ENCODE measurements at regions of chr1 and their contacts with region 1.

Region 1: GRCh38 chr1:6489799-6490180 is 1.7 kb downstream of the PLEKHG5 start:
- DNase-seq: no peak
- H3K4me3 ChIP-seq: peak overlapping the region; percentile 84
- CTCF ChIP-seq: peak; percentile 95

Region 2: GRCh38 chr1:6273380-6273891 is 216.4 kb before region 1 on chr1:
- CTCF ChIA-PET with region 1: no interaction called
- POLR2A ChIA-PET with region 1: no interaction called
- DNase-seq: peak; percentile 9
- H3K4me3 ChIP-seq: no peak overlapping the region
- CTCF ChIP-seq: no peak

Region 3: DNA sequence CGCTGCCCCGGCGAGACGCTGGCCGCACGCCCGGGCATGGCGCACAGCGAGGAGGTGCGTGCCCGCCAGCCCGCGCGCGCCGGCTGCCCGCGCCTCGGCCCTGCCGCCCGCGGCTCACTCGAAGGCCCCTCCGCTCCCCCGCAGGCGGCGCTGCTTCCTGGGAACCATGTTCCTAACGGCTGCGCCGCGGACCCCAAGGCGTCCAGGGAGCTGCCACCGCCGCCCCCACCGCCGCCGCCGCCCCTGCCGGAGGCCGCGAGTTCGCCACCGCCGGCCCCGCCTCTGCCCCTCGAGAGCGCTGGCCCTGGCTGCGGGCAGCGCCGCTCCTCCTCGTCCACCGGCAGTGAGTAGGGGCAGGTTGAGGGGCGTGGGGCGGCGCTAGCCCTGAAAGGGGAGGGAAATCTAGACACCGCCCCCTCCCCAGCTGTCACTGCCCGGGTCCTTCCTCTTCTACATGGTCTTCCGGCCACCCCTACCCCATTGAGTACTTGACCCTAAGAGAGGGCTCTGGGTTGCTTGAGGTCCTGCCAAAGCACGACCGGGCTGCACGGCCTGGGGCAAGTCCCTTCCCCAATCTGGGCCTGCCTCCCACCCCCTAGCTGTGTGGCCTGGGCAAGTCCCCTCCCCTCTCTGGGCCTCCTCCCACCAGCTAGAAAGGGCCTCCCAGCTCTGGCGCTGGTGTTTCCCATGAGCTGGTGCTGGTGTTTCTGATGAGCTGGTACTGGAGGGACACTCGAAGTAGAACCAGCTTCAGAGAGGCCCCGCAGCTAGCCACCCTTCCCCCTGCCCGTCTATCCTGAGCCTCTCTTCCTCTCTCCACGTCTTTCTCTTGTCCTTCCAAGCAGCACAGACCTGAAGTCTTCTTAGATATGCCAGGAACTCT is 40.8 kb before region 1 on chr1:
- CTCF ChIA-PET with region 1: interaction called, 13 read pairs
- POLR2A ChIA-PET with region 1: no interaction called
- DNase-seq: no peak
- H3K4me3 ChIP-seq: no peak overlapping the region
- CTCF ChIP-seq: peak; percentile 30

Region 4: GRCh38 chr1:6507037-6507428 is 17.2 kb after region 1 on chr1:
- CTCF ChIA-PET with region 1: interaction called, 96 read pairs
- POLR2A ChIA-PET with region 1: no interaction called
- DNase-seq: no peak
- H3K4me3 ChIP-seq: no peak overlapping the region
- CTCF ChIP-seq: no peak

Region 5: DNA sequence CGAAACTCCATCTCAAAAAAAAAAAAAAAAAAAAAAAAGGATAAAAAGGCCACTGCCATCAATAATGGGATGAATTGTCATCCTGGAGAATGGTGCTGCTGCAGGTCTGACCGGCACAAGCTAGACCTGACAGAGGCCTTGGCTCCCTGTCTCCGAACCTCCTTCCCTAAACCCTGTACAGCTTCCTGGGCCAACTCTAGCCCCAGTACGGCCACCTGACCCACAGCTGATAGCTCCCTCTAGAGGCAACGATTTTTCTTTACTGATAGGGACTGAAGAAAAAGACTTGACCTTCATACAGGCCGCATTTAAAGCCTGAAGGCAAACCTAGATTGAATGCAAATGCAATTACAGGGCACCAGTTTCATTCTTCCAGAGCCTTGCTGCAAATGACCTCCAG is 33.8 kb after region 1 on chr1:
- CTCF ChIA-PET with region 1: interaction called, 139 read pairs
- POLR2A ChIA-PET with region 1: no interaction called
- DNase-seq: no peak
- H3K4me3 ChIP-seq: no peak overlapping the region
- CTCF ChIP-seq: peak; percentile 52

Region 6: DNA sequence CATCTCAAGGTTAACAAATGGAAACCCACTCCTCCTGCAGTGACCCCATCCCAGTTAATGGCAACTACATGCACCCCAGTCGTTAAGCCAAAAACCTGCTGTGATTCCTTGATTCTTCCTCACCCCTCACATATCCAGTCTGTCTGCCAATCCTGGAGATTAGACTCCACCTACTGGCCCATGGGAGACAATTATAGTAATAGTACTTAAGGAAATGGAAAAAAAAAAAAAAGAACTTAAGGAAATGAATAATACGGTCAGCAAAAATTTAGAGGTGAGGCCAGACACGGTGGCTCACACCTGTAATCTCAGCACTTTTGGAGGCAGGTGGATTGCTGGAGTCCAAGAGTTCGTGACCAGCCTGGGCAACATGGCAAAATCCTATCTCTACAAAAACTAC is 57.5 kb after region 1 on chr1:
- CTCF ChIA-PET with region 1: interaction called, 138 read pairs
- POLR2A ChIA-PET with region 1: no interaction called
- DNase-seq: no peak
- H3K4me3 ChIP-seq: no peak overlapping the region
- CTCF ChIP-seq: no peak

Region 7: GRCh38 chr1:6579374-6580118 is 89.8 kb after region 1 on chr1 and contains the start of gene ZBTB48:
- CTCF ChIA-PET with region 1: interaction called, 40 read pairs
- POLR2A ChIA-PET with region 1: no interaction called
- DNase-seq: peak; percentile 71
- H3K4me3 ChIP-seq: peak within 1 kb of the TSS; percentile 87
- CTCF ChIP-seq: no peak